Calu3 (cell line): ENCODE measurements at regions of chr10 and their contacts with region 1.

Region 1: DNA sequence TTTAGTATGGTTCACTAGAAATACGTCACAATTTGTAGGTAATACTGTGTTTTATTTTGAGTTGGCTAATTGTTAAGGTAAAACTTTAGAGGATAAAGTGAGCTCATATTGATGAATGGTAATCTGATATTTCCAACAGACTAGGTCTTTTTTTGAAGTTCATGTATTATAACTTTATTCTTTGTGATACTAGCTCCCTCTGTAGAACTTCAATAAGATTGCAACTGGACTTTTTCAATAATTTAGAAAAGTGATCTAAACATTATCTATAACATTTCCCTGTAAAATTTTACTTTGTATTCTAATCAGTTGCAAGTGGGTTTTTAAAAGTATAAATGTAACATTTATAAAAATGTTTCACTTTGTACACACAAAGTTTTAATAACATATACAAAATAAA is 83.5 kb downstream of the ADK start:
- DNase-seq: no peak
- H3K4me3 Mint-ChIP-seq: no peak overlapping the region
- H3K27ac Mint-ChIP-seq: no peak overlapping the region
- H3K4me1 Mint-ChIP-seq: peaks cover 26% of the 10 kb centered on the region
- H3K27me3 Mint-ChIP-seq: no peaks in the 10 kb centered on the region
- CTCF ChIP-seq: no peak

Region 2: DNA sequence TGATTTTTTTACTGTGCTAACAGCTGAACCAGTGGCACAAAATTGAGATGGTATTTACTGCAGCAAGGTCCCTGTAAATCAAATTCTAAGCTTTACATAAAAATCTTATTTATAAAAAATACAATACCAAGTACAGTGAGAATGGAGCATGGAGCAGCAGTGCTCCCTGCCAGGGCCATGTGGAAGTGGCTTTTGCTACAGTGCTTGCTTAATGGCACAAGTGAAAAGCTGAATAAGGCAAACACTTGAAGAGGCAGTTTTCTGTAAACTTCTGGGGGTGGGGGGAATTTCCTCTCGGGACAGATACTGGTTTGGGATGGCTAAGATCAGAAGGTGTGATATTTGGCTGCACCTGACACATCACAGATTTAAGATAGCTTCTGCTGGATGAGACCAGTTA is 111.5 kb before region 1 on chr10:
- CTCF ChIA-PET with region 1: interaction called, 6 read pairs
- intact Hi-C with region 1: loop called (anchors 1 kb)
- DNase-seq: no peak
- H3K4me3 Mint-ChIP-seq: no peak overlapping the region
- H3K27ac Mint-ChIP-seq: no peak overlapping the region
- H3K4me1 Mint-ChIP-seq: peaks cover 12% of the 10 kb centered on the region
- H3K27me3 Mint-ChIP-seq: no peaks in the 10 kb centered on the region
- CTCF ChIP-seq: no peak

Region 3: GRCh38 chr10:74189999-74190421 is 44.6 kb before region 1 on chr10:
- CTCF ChIA-PET with region 1: interaction called, 4 read pairs
- intact Hi-C with region 1: loop called (anchors 1 kb)
- DNase-seq: peak; percentile 59
- H3K4me3 Mint-ChIP-seq: peak overlapping the region; percentile 41
- H3K27ac Mint-ChIP-seq: peak overlapping the region; percentile 69
- H3K4me1 Mint-ChIP-seq: peaks cover 64% of the 10 kb centered on the region
- H3K27me3 Mint-ChIP-seq: no peaks in the 10 kb centered on the region
- CTCF ChIP-seq: no peak

Region 4: DNA sequence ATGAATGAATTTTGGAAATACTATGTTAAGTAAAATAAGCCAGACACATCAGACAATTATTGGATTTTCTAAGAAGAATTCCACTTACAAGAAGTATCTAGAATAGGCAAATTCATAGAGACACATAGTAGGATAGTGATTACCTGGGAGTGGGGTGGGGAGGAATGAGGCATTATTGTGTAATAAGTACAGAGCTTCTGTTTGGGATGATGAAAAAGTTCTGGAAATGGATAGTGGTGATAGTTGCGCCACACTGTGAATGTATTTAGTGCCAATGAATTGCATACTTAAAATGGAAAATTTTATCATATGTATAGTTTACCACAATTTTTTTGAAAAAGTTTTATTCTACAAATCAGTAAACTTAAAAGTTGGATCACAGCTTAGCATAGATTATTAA is 294.6 kb after region 1 on chr10:
- CTCF ChIA-PET with region 1: no interaction called
- intact Hi-C with region 1: no loop called
- DNase-seq: no peak
- H3K4me3 Mint-ChIP-seq: no peak overlapping the region
- H3K27ac Mint-ChIP-seq: no peak overlapping the region
- H3K4me1 Mint-ChIP-seq: no peaks in the 10 kb centered on the region
- H3K27me3 Mint-ChIP-seq: no peaks in the 10 kb centered on the region
- CTCF ChIP-seq: no peak